ENCODE measurements at regions of chr11 and their contacts with region 1.

Region 1: DNA sequence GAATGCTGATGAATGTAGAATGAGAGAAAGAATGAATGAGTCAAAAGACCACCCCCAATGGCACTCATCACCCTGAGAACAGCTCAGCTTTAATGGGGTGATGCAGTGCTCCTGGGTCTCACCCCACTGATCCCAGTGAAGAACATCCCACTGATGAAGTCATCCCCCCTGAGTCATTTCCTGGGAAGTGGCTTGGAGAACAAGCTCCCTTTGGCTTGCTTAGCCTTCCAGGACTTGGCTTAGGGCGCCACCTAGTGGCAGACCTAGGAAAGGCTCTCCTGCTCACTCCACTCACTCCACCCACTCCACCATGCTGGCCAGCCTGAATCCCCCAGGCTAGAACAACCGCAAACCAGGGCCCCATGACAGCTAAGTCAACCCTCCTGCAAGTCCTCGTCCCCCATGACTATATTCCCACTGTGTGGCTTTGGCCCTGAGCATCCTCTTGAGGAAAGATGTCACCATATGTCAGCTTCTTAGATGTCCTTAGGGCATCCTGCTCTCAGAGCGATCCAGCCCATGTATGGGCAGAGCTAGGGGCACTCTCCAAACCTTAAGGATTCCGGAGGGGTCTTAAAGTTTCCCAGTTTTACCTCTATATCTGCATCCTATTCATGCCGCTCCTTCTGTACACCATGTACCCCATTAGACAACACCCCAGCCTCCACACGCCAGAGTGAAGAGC is 17.8 kb upstream of the TMPRSS13 start:
- DNase-seq: peak; percentile 82 to 90
- ATAC-seq: peak; percentile 58 to 70 (median 60)
- H3K4me3 ChIP-seq: no peak overlapping the region
- H3K4me3 Mint-ChIP-seq: peak overlapping the region; percentile 38
- H3K27ac ChIP-seq: no peak overlapping the region
- H3K27ac Mint-ChIP-seq: no peak overlapping the region
- H3K4me1 ChIP-seq: peaks cover 54% of the 10 kb centered on the region
- H3K4me1 Mint-ChIP-seq: peaks cover 43 to 56% of the 10 kb centered on the region in 2 donors
- H3K27me3 ChIP-seq: no peaks in the 10 kb centered on the region
- H3K27me3 Mint-ChIP-seq: peaks cover 2 to 10% of the 10 kb centered on the region in 2 donors
- CTCF ChIP-seq: peak; percentile 96

Region 2: GRCh38 chr11:117426269-117426685 is 520.7 kb before region 1 on chr11:
- intact Hi-C with region 1: loop called (anchors 10 kb)
- DNase-seq: peak; percentile 56 to 76
- ATAC-seq: peak; percentile 44 to 71 (median 59)
- H3K4me3 ChIP-seq: no peak overlapping the region
- H3K4me3 Mint-ChIP-seq: no peak overlapping the region
- H3K27ac ChIP-seq: no peak overlapping the region
- H3K27ac Mint-ChIP-seq: no peak overlapping the region
- H3K4me1 ChIP-seq: peaks cover 9% of the 10 kb centered on the region
- H3K4me1 Mint-ChIP-seq: peaks cover 7 to 14% of the 10 kb centered on the region in 2 donors
- H3K27me3 ChIP-seq: no peaks in the 10 kb centered on the region
- H3K27me3 Mint-ChIP-seq: peaks cover 8 to 15% of the 10 kb centered on the region in 2 donors
- CTCF ChIP-seq: peak; percentile 84

Region 3: DNA sequence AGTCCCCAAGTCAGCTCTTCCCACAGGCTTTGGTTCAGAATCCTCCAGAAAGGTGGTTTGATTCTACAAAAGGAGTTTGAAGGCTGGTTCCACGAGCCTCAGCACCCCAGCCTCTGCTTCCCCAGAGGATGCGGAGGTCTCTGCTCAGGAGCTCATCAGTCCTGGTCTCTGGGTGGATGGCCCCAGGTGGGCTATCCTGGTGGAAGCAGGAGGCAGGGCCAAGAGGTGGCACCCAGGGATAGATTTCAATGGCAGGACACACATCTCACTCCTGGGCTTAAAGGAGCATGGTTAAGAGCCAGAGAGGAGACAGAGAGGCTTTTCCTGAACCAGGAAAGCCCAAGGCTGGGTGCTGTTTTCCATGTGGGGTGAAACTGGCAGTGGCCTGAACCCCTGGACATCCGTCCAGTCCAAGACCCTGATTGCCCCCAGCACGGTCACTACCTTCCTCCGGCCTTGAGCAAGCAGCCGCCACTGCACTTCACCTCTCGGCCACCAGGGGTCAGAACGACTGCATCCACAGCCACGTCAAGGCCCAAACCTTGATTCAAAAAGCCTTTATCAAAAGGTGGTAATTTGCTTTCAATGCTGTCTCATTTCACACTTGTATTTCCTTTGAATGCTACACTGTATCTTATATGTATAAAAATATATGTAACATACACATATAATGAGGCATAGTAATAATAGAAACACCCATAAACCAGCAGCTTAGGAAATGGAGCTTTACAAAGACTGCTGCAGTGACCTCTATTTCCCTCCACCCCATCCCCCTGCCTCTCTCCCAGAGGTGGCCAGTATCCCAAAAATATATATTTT is 103.1 kb before region 1 on chr11:
- intact Hi-C with region 1: loop called (anchors 1 kb)
- DNase-seq: peak; percentile 78 to 90
- ATAC-seq: peak; percentile 69 to 94 (median 86)
- H3K4me3 ChIP-seq: no peak overlapping the region
- H3K4me3 Mint-ChIP-seq: no peak overlapping the region
- H3K27ac ChIP-seq: no peak overlapping the region
- H3K27ac Mint-ChIP-seq: no peak overlapping the region
- H3K4me1 ChIP-seq: peaks cover 17% of the 10 kb centered on the region
- H3K4me1 Mint-ChIP-seq: no peaks in the 10 kb centered on the region
- H3K27me3 ChIP-seq: no peaks in the 10 kb centered on the region
- H3K27me3 Mint-ChIP-seq: no peaks in the 10 kb centered on the region
- CTCF ChIP-seq: peak; percentile 96

Region 4: GRCh38 chr11:117985953-117986887 is 39.2 kb after region 1 on chr11 and contains the start of gene IL10RA:
- intact Hi-C with region 1: loop called (anchors 1 kb)
- DNase-seq: peak; percentile 92
- ATAC-seq: peak; percentile 86 to 93 (median 89)
- H3K4me3 ChIP-seq: peak within 1 kb of the TSS; percentile 99
- H3K4me3 Mint-ChIP-seq: peak within 1 kb of the TSS; percentile 99
- H3K27ac ChIP-seq: peak within 1 kb of the TSS; percentile 96
- H3K27ac Mint-ChIP-seq: peak within 1 kb of the TSS; percentile 94 to 98
- H3K4me1 ChIP-seq: peaks cover 65% of the 10 kb centered on the region
- H3K4me1 Mint-ChIP-seq: peaks cover 78 to 80% of the 10 kb centered on the region in 2 donors
- H3K27me3 ChIP-seq: no peaks in the 10 kb centered on the region
- H3K27me3 Mint-ChIP-seq: no peaks in the 10 kb centered on the region
- CTCF ChIP-seq: no peak
- total RNA-seq, gene IL10RA: 263 to 286 (median 268) TPM

Measured in natural killer cell (primary cell).